ENCODE measurements at regions of chr1 and their contacts with region 1.

Region 1: DNA sequence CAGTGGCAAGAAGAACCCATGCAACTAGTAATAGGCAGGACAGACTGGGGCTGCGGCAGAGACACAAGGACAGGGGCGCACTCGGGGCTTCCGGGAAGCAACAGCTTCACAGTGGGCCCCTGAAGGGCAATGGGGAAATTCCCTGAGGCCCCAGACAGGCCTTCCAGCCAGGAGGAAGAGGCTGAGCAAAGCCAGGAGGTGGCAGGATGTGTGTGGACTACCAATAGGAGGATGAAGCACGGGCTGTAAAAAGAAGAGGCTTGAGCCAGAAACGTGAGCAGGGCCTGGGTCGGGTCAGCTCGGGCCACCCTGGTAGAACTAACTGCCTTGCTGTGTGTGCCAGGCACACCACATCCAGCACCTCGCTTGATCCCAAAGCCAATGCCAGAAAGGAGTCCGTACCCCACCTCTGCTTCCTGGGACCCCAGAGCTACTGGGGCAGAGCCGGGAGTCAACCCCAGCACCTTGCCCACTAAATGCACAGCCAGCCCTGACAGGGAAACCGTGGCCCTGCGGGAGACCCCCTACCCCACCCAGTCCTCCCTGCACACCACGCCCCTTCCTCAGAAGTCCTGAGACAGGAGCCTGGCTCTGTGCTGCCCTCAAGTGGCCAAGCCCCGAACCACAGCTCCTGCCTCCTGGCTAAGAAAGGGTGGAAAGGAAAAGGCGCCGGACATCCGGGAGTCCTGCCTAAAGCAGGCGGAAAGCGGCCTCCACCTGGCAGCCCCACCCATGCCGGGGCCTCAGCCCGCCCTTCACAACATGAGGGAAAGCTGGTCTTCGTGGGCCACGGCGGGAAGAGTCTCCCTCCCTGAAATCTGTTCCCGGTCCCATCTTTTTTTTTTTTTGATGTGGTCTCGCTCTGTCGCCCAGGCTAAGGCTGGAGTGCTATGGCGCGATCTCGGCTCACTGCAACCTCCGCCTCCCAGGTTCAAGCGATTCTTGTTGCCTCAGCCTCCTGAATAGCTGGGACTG is 33.7 kb downstream of the TTC39A start:
- DNase-seq: peak; percentile 83 to 99
- H3K4me3 ChIP-seq: no peak overlapping the region
- H3K27ac ChIP-seq: no peak overlapping the region
- H3K4me1 ChIP-seq: peaks cover 0 to 7% (median 5%) of the 10 kb centered on the region in 4 experiments; a peak in 5 of 7 replicates
- H3K27me3 ChIP-seq: no peaks in the 10 kb centered on the region; a peak in 1 of 7 replicates
- CTCF ChIP-seq: peak; percentile 89 to 93 (median 90)
- EP300 ChIP-seq: 0 out of 3 replicates have a peak, but pooled peaks of 1 of the 2 experiments have one; percentile 46
- POLR2A ChIP-seq: no peak
- RAD21 ChIP-seq: peak; percentile 86 to 94

Region 2: GRCh38 chr1:51101976-51102375 is 194.7 kb before region 1 on chr1 and contains the start of gene C1orf185:
- CTCF ChIA-PET with region 1: no interaction called
- POLR2A ChIA-PET with region 1: no interaction called
- DNase-seq: no peak
- H3K4me3 ChIP-seq: no peak within 1 kb of the TSS
- H3K27ac ChIP-seq: no peak within 1 kb of the TSS
- H3K4me1 ChIP-seq: no peaks in the 10 kb centered on the region
- H3K27me3 ChIP-seq: no peaks in the 10 kb centered on the region
- CTCF ChIP-seq: no peak
- EP300 ChIP-seq: no peak
- POLR2A ChIP-seq: no peak
- RAD21 ChIP-seq: no peak
- total RNA-seq, gene C1orf185: not detected in 2 replicates

Region 3: GRCh38 chr1:51231121-51231520 is 65.5 kb before region 1 on chr1:
- CTCF ChIA-PET with region 1: interaction called, 11 read pairs
- POLR2A ChIA-PET with region 1: interaction called, 5 read pairs
- DNase-seq: no peak
- H3K4me3 ChIP-seq: no peak overlapping the region
- H3K27ac ChIP-seq: no peak overlapping the region
- H3K4me1 ChIP-seq: peaks cover 0 to 3% (median 0%) of the 10 kb centered on the region in 4 experiments; a peak in 4 of 7 replicates
- H3K27me3 ChIP-seq: no peaks in the 10 kb centered on the region; a peak in 1 of 7 replicates
- CTCF ChIP-seq: no peak
- EP300 ChIP-seq: no peak
- POLR2A ChIP-seq: no peak
- RAD21 ChIP-seq: no peak

Region 4: GRCh38 chr1:51276286-51276685 is 20.4 kb before region 1 on chr1:
- CTCF ChIA-PET with region 1: interaction called, 14 read pairs
- POLR2A ChIA-PET with region 1: no interaction called
- DNase-seq: no peak
- H3K4me3 ChIP-seq: no peak overlapping the region
- H3K27ac ChIP-seq: no peak overlapping the region
- H3K4me1 ChIP-seq: no peaks in the 10 kb centered on the region
- H3K27me3 ChIP-seq: no peaks in the 10 kb centered on the region
- CTCF ChIP-seq: no peak
- EP300 ChIP-seq: no peak
- POLR2A ChIP-seq: no peak
- RAD21 ChIP-seq: no peak

Region 5: DNA sequence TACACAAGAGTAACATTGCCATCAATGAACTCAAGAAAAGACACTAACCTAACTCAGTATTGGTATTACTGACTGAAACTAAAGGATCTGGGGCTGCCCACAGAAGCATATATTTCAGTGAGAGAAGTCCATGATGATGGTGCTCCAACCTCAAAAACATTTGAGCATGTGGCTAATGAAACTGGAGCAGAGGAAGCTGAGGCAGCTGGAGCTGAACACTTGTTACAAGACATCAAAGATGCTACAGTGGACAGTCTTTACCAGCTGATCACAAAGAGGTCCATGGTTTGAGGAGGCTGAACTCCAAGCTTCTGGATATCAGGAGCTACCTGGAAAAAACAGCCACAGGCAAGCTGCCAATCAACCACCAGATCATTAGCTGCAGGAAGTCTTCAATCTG is 75.9 kb after region 1 on chr1:
- CTCF ChIA-PET with region 1: no interaction called
- POLR2A ChIA-PET with region 1: no interaction called
- DNase-seq: no peak
- H3K4me3 ChIP-seq: no peak overlapping the region
- H3K27ac ChIP-seq: no peak overlapping the region
- H3K4me1 ChIP-seq: no peaks in the 10 kb centered on the region
- H3K27me3 ChIP-seq: no peaks in the 10 kb centered on the region
- CTCF ChIP-seq: no peak
- EP300 ChIP-seq: no peak
- POLR2A ChIP-seq: no peak
- RAD21 ChIP-seq: no peak

Region 6: GRCh38 chr1:51578383-51579082 is 281.9 kb after region 1 on chr1:
- CTCF ChIA-PET with region 1: no interaction called
- POLR2A ChIA-PET with region 1: no interaction called
- DNase-seq: no peak
- H3K4me3 ChIP-seq: no peak overlapping the region
- H3K27ac ChIP-seq: no peak overlapping the region
- H3K4me1 ChIP-seq: no peaks in the 10 kb centered on the region
- H3K27me3 ChIP-seq: no peaks in the 10 kb centered on the region
- CTCF ChIP-seq: no peak
- EP300 ChIP-seq: no peak
- POLR2A ChIP-seq: no peak
- RAD21 ChIP-seq: no peak